CD8-positive, alpha-beta memory T cell (primary cell): ENCODE measurements at regions of chr1 and their contacts with region 1.

Region 1: GRCh38 chr1:154404984-154405761 is at the start of gene IL6R:
- DNase-seq: peak; percentile 57 to 78 (median 71)
- H3K4me3 ChIP-seq: peak within 1 kb of the TSS; percentile 68
- H3K4me3 Mint-ChIP-seq: peak within 1 kb of the TSS; percentile 85 to 93 (median 89)
- H3K27ac ChIP-seq: peak within 1 kb of the TSS; percentile 38
- H3K27ac Mint-ChIP-seq: peak within 1 kb of the TSS; percentile 72 to 88 (median 84)
- H3K4me1 ChIP-seq: peaks cover 75% of the 10 kb centered on the region
- H3K4me1 Mint-ChIP-seq: peaks cover 74 to 80% (median 75%) of the 10 kb centered on the region in 3 donors
- H3K27me3 ChIP-seq: no peaks in the 10 kb centered on the region
- H3K27me3 Mint-ChIP-seq: peaks cover 0 to 2% of the 10 kb centered on the region in 2 donors
- total RNA-seq, gene IL6R: 2.8 to 3.8 TPM

Region 2: DNA sequence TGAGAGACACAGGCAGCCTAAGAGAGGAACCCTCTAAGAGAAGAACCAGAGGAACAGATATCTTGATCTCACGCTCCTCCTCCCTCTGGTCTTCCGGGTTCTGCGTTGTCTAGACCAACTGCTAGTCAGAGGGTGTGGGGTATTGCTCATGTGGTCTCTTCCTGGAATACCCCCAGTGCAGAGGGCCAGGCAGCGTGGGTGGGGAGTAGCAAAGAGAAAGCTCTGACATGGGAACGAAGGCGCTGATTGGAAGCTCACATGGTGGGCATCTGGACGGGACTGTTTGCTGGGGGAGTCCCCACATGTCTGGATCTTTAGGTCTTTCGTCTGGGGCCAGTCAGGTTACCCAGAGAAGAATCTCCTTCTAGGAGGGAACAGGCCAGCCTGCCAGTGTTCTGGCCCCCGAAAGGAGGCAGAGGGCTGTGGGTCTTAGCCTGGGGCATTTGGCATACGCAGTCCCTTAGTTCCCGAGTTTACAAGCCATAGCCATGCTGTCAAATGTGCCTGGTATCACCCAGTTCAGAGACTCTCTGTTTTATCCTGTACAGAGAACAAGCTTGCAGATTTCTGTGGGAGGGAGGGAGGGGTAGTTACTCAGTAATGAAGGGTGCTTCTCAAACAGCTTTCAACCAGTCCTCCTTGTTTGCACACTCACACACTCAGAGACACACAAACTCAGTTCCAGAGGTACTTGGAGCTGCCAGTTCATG is 18.4 kb before region 1 on chr1:
- CTCF ChIA-PET with region 1: interaction called, 11 read pairs
- POLR2A ChIA-PET with region 1: interaction called, 3 read pairs
- DNase-seq: peak; percentile 47 to 78 (median 61)
- H3K4me3 ChIP-seq: peak overlapping the region; percentile 16
- H3K4me3 Mint-ChIP-seq: peak overlapping the region; percentile 31 to 86 (median 80)
- H3K27ac ChIP-seq: peak overlapping the region; percentile 43
- H3K27ac Mint-ChIP-seq: peak overlapping the region; percentile 90 to 100 (median 97)
- H3K4me1 ChIP-seq: peaks cover 33% of the 10 kb centered on the region
- H3K4me1 Mint-ChIP-seq: peaks cover 28 to 34% (median 31%) of the 10 kb centered on the region in 3 donors
- H3K27me3 ChIP-seq: no peaks in the 10 kb centered on the region
- H3K27me3 Mint-ChIP-seq: no peaks in the 10 kb centered on the region

Region 3: DNA sequence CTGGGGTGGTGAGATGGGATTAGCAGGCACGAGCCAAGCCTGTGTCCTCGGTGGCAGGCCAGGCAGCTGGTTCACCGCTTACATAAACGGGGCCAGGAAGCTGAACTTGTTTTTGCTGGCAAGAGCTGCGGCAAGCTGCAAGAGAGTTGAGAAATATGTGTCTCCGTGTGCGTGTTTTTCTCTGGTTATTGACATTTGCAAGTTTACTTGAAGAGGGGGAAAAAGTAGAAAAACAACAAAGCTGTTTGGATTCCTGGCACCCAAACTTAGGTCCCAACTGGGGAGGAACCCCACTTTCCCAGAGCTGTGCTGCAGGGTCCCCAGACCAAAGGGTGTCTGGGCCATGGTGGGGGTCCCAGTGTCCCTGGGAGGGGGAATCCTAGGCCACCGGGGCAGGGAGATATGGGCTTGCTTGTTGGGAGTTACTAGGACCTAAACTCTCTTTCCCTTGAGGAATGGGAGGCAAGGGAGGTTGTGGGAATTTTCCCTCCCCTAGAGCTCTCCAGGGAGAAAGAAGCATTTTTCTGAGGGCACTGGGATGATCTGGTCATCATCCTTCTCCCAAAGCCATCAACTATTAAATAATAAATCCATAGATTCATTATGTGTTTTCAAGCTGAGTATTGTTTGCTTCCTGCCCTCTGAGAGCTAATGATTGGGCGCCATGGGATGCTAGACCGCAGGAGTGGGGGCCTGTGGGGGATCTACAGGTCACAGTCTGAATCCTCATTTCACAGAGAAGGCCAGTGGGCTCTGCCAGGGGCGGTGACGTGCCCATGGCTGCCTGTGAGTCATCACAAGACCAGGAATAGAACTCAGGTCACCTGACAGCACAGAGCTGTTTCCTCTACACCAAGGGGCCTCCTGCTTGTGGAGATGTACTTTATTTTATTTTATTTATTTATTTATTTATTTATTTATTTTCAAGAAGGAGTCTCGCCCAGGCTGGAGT is 14.7 kb after region 1 on chr1:
- CTCF ChIA-PET with region 1: no interaction called
- POLR2A ChIA-PET with region 1: no interaction called
- DNase-seq: peak in 2 of 5 donors; percentile 40 to 47
- H3K4me3 ChIP-seq: peak overlapping the region; percentile 46
- H3K4me3 Mint-ChIP-seq: peak overlapping the region; percentile 12 to 69 (median 51)
- H3K27ac ChIP-seq: no peak overlapping the region
- H3K27ac Mint-ChIP-seq: peak overlapping the region; percentile 29 to 89 (median 75)
- H3K4me1 ChIP-seq: peaks cover 61% of the 10 kb centered on the region
- H3K4me1 Mint-ChIP-seq: peaks cover 24 to 33% (median 28%) of the 10 kb centered on the region in 3 donors
- H3K27me3 ChIP-seq: no peaks in the 10 kb centered on the region
- H3K27me3 Mint-ChIP-seq: peaks cover 0 to 3% of the 10 kb centered on the region in 2 donors